ENCODE measurements at regions of chr7 and their contacts with region 1.

Region 1: DNA sequence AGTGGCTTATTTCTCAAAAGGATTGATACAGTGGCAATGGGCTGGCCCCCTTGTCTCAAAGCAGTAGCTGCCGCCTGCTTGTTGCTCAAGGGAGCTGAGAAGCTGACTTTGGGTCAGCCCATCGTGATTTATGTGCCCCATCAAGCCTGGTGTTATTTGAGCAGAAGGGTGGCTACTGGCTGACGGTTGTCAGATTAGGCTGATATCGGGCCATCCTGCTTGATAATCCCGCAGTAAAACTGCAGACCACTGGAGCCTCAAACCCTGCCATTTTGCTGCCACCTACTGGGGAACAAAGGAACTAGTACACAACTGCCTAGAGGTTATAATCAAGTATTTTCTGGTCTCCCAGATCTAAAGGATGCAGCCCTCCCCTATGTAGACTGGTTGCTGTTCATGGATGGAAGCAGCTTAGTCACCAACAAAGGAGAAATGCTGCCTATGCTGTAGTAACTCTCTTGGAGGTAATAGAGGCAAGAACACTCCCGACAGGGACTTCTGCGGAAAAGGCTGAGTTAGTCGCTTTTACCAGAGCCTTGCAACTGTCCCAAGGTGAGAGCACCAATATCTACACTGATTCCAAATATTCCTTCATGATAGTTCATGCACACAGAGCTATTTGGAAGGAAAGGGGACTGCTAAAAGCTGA is 65.9 kb upstream of the ZNF92 start:
- DNase-seq: peak; percentile 39 to 47 (median 42)
- H3K4me3 ChIP-seq: no peak overlapping the region
- H3K4me3 Mint-ChIP-seq: no peak overlapping the region
- H3K27ac ChIP-seq: no peak overlapping the region
- H3K27ac Mint-ChIP-seq: no peak overlapping the region
- H3K4me1 ChIP-seq: no peaks in the 10 kb centered on the region
- H3K4me1 Mint-ChIP-seq: peaks cover 0 to 3% (median 1%) of the 10 kb centered on the region in 4 donors
- H3K27me3 ChIP-seq: no peaks in the 10 kb centered on the region
- H3K27me3 Mint-ChIP-seq: peaks cover 3 to 5% of the 10 kb centered on the region in 2 donors

Region 2: DNA sequence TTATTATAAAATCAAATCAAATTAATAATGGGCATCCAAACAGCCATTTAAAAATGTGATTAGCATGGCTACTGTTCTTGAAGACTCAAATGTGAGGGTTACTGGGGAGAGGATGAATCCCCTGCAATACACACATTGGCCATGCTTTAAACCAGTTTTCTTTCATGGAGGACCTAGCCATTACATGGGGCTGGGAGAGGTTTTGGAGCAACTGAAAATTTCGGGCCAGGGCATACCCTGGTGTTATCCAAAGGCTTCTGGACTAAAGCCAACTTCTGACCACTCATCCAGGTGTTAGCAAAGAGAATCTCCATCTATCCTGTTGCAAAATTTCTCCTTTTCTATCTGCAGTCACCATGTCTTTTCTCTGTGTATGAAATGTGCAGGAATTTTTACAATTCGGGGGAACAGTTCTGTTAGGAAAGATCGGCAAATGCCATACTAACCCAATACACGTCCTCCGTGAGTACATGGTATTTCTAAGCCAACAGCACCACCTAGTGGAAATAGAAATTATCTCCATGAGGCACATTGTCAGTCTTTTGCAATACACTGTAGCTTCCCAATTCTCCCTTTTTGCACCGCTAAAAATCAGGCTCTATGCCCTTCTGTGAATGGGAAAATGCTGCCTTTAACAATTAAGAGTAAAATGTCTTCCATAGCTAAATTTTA is 688.9 kb before region 1 on chr7:
- CTCF ChIA-PET with region 1: no interaction called
- POLR2A ChIA-PET with region 1: no interaction called
- intact Hi-C with region 1: no loop called
- DNase-seq: peak; percentile 44 to 65 (median 56)
- H3K4me3 ChIP-seq: no peak overlapping the region
- H3K4me3 Mint-ChIP-seq: no peak overlapping the region
- H3K27ac ChIP-seq: no peak overlapping the region
- H3K27ac Mint-ChIP-seq: no peak overlapping the region
- H3K4me1 ChIP-seq: peaks cover 3% of the 10 kb centered on the region
- H3K4me1 Mint-ChIP-seq: peaks cover 0 to 2% (median under 1%) of the 10 kb centered on the region in 4 donors
- H3K27me3 ChIP-seq: no peaks in the 10 kb centered on the region
- H3K27me3 Mint-ChIP-seq: no peaks in the 10 kb centered on the region

Region 3: GRCh38 chr7:64636386-64636785 is 671.4 kb before region 1 on chr7:
- CTCF ChIA-PET with region 1: no interaction called
- POLR2A ChIA-PET with region 1: no interaction called
- intact Hi-C with region 1: loop called (anchors 5 kb)
- DNase-seq: no peak
- H3K4me3 ChIP-seq: no peak overlapping the region
- H3K4me3 Mint-ChIP-seq: no peak overlapping the region
- H3K27ac ChIP-seq: no peak overlapping the region
- H3K27ac Mint-ChIP-seq: peak overlapping the region in 2 of 7 donors; percentile 50 to 59
- H3K4me1 ChIP-seq: no peaks in the 10 kb centered on the region
- H3K4me1 Mint-ChIP-seq: peaks cover 0 to 4% (median under 1%) of the 10 kb centered on the region in 4 donors
- H3K27me3 ChIP-seq: no peaks in the 10 kb centered on the region
- H3K27me3 Mint-ChIP-seq: no peaks in the 10 kb centered on the region

Region 4: DNA sequence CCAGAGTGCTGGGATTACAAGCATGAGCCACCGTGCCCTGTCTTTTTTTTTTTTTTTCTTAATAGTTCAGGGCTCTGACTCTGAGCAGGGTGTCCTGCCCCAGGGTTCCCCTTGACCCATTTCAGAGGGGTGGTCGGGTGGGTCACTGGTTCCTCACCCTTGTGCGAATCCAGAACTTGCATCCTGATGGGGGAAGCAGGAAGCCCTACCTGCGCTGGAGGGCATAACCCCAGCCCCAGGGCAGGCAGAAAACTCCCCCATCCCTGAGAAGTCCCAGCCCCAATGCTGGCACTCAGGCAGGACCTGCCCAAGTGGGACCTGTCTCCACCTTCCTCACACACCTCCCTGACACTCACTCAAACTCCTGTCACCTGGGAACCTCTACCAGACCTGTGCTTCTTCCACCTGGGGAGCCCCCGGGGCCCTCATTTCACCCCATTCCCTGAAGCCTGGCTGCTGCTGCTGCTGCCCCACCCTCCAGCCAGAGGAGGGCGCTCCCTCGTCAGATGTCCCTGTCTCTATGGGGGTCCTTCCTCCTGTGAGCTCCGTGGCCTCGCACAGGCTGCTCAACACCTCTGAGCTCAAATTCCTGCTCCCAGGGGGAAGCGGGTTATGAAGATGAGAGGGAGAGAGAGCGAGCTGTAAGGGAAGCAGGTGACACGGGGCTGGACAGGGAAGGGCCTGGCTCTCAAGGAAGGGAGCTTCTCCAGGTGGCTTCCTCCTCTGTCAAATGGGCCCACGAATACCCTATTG is 419.8 kb before region 1 on chr7:
- CTCF ChIA-PET with region 1: interaction called, 3 read pairs
- POLR2A ChIA-PET with region 1: no interaction called
- intact Hi-C with region 1: loop called (anchors 2 kb)
- DNase-seq: peak in 4 of 5 donors; percentile 15 to 41 (median 30)
- H3K4me3 ChIP-seq: peak overlapping the region; percentile 16 to 65
- H3K4me3 Mint-ChIP-seq: peak overlapping the region; percentile 82 to 97 (median 90)
- H3K27ac ChIP-seq: no peak overlapping the region
- H3K27ac Mint-ChIP-seq: peak overlapping the region in 5 of 7 donors; percentile 9 to 78 (median 66)
- H3K4me1 ChIP-seq: peaks cover 18% of the 10 kb centered on the region
- H3K4me1 Mint-ChIP-seq: peaks cover 5 to 26% (median 13%) of the 10 kb centered on the region in 4 donors
- H3K27me3 ChIP-seq: peaks cover 5% of the 10 kb centered on the region
- H3K27me3 Mint-ChIP-seq: peaks cover 36 to 48% of the 10 kb centered on the region in 2 donors

Region 5: GRCh38 chr7:65216459-65216858 is 91.3 kb before region 1 on chr7:
- CTCF ChIA-PET with region 1: interaction called, 31 read pairs
- POLR2A ChIA-PET with region 1: interaction called, 4 read pairs
- intact Hi-C with region 1: no loop called
- DNase-seq: peak; percentile 53 to 72 (median 69)
- H3K4me3 ChIP-seq: no peak overlapping the region
- H3K4me3 Mint-ChIP-seq: peak overlapping the region in 5 of 8 donors; percentile 29 to 64 (median 44)
- H3K27ac ChIP-seq: no peak overlapping the region
- H3K27ac Mint-ChIP-seq: peak overlapping the region in 1 of 7 donors; percentile 17
- H3K4me1 ChIP-seq: no peaks in the 10 kb centered on the region
- H3K4me1 Mint-ChIP-seq: peaks cover 0 to 5% (median 3%) of the 10 kb centered on the region in 4 donors
- H3K27me3 ChIP-seq: no peaks in the 10 kb centered on the region
- H3K27me3 Mint-ChIP-seq: peaks cover 0 to 2% of the 10 kb centered on the region in 2 donors

Measured in CD4-positive, alpha-beta memory T cell (primary cell).